ENCODE measurements at regions of chr7 and their contacts with region 1.

Region 1: DNA sequence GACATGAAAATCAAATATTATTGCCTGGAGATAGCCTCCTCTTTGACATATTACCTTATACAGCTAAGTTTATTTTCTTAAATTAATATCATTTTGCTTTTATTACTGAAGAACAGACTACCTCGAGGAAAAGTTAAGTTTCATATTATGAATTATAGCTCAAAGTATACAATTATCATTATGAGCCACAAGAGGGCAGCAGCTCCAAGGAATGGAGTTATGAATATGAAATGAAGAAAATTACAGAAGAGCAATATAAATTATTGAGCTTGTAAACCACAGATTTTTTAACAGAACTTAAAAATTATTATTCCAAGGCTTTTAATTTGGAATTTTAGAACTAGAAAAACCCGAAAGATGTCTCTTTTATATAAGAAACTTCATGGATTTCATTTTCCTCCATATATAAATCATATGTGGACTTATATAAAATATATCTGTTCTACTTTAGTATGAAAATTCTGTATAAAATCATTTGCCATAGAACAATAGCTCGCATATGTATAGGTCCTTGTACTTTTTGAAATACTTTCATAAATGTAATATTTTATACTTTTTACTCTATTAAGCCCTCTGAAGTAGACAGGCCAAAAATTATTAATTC is 40.1 kb downstream of the IQUB start:
- DNase-seq: peak; percentile 27
- H3K4me3 Mint-ChIP-seq: no peak overlapping the region
- H3K27ac Mint-ChIP-seq: no peak overlapping the region
- H3K4me1 Mint-ChIP-seq: no peaks in the 10 kb centered on the region
- H3K27me3 Mint-ChIP-seq: peaks cover 4% of the 10 kb centered on the region

Region 2: GRCh38 chr7:123231027-123232000 is 263.0 kb before region 1 on chr7:
- CTCF ChIA-PET with region 1: no interaction called
- DNase-seq: no peak
- H3K4me3 Mint-ChIP-seq: no peak overlapping the region
- H3K27ac Mint-ChIP-seq: no peak overlapping the region
- H3K4me1 Mint-ChIP-seq: no peaks in the 10 kb centered on the region
- H3K27me3 Mint-ChIP-seq: no peaks in the 10 kb centered on the region

Region 3: GRCh38 chr7:123871998-123872867 is 377.9 kb after region 1 on chr7:
- CTCF ChIA-PET with region 1: interaction called, 11 read pairs
- DNase-seq: peak; percentile 55
- H3K4me3 Mint-ChIP-seq: no peak overlapping the region
- H3K27ac Mint-ChIP-seq: no peak overlapping the region
- H3K4me1 Mint-ChIP-seq: no peaks in the 10 kb centered on the region
- H3K27me3 Mint-ChIP-seq: peaks cover 3% of the 10 kb centered on the region